ENCODE measurements at regions of chr6 and their contacts with region 1.

Region 1: DNA sequence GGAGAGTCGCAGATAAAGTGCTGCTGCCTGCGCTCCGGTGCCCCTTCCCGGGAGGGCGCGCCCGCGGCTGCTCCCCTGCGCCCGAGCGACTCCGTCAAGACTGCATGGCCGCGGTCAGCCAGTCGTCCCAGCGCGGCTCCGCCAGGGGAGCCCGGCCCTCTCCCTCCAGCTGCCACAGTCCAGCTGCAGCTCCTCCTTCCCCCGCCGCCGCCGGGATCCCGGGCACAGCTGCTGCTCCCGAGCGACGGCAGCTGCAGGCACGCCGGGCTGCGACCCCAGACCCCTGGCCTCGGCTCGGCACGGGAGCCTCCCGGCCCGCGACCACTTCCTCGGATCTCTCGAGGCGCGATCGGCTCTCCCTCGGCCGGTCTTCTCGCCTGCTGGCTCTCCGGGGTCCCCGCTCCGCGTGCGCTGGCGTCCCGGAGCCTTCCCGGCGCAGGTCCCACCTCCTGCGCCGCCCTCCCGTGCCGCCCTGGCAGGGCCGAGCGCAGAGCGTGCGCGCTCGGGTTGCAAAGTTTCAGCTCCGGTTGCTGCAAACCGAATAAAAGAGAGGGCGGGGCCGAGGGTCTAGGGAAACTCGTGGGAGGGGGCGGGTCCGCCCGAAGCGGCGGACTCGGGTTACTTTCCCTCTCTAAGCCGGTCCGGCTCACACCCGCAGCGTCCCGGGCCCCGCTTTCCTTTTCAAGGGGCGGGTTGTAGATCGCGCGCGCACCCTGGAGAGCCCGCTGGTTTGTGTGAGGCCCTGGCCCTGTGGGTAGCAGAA is at the start of gene CNKSR3:
- DNase-seq: peak; percentile 90
- total RNA-seq, gene CNKSR3: 34.4 TPM

Region 2: GRCh38 chr6:154432533-154433476 is 77.5 kb before region 1 on chr6:
- intact Hi-C with region 1: loop called (anchors 5 kb)
- DNase-seq: no peak

Region 3: DNA sequence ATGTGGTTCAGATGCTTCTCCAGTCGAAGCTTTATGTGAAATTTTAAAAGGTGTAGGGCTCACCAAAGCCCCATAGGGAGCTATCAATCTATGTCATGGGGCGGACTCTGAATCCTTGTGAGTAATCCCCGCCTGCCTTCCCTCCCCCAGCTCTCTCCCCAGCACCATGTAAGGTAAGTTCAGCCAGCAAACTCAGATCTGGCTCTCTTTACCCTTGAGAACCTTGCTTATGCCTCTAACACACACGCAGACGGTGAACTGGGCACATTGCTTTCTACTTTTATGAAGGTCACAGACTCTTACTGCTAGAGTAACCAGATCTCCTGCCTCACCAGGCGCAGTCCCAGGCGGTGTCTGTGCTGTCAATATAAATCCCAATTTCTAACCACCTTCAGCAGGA is 82.8 kb after region 1 on chr6:
- intact Hi-C with region 1: loop called (anchors 5 kb)
- DNase-seq: no peak